HAP-1 (cell line): ENCODE measurements at regions of chr4 and their contacts with region 1.

Region 1: DNA sequence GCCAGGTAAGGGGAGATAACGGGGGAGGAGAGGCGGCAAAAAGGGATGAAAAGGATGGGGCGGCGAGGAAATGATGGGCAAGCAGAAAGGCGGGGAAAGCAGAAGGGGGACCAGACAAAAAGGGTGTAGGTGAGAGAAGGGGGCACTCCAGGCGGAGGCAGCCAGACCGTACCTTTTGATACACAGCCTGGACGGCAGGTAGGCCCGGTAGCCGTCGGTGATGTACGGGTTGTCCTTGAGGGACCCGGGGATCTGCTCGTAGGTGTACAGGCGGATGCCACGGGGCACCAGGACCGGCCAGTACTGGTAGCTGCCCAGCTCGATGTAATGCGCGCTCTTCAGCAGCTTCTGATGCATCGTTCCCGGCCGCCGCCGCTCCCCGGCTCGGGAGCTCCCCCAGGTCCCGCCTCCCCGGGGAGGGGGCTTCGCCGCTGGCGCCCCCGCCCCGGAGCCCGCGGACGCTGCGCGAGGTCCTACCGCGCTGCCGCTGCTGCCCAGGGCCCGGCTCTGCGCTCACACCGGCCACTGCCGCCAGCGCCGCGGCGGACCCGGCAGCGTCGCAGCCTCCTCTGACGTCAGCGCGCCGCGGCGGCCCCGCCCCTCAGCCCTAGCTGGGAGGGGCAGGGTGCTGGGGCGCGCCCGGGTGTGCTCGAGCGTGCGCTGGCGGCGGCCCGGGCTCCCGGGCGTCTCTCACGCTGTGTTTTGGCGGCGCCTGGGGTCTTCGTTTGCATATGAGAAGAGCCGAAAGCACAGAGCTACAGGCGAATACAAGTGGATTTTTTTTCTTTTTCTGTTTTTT is at the start of gene PAQR3:
- DNase-seq: peak; percentile 83 to 92
- H3K4me3 ChIP-seq: peak within 1 kb of the TSS; percentile 66
- H3K4me1 ChIP-seq: peaks cover 22% of the 10 kb centered on the region
- H3K27me3 ChIP-seq: no peaks in the 10 kb centered on the region

Region 2: GRCh38 chr4:80184053-80184790 is 1245.2 kb after region 1 on chr4:
- in situ Hi-C with region 1: loop called (anchors 25 kb)
- DNase-seq: peak; percentile 69 to 95
- H3K4me3 ChIP-seq: peak overlapping the region; percentile 47
- H3K4me1 ChIP-seq: no peaks in the 10 kb centered on the region
- H3K27me3 ChIP-seq: no peaks in the 10 kb centered on the region; the same call in 1 of the 2 replicates

Region 3: DNA sequence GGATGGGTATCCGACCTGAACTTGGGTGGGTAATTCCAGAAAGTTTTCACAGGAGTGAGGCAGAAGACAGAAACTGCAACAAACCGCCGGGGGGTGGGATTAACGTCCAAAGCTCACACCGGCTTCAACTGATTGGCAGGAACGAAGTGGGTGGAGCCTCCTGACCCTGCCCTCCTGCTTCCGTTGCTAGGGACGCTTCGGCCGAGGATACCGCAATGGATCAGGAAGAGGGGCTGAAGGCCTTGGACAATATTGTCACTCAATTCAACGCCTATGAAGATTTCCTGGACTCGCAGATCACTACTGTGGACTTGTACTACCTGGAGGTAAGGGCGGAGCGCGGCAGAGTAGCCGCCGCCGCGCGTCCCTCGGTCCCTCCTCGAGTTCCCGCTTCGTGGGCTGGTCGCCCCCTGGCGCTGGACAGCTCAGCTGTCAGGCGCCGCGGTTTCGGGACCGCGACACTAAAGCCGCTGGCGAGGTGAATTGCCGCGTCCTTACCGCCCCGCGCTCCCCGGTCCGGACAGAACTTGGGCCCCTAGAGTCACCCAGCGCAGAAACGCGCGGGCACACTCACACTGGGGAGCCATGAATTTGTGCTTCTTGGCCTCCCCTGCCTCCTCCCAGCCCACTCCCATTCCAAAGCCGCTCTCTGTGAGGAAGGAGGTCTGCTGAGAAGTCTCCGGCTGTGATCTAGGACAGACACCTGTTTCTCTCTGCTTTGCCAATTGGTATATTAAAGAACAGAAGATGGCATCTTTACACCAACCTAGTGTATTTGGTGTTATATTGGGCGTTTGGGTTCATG is 1396.7 kb after region 1 on chr4 and contains the start of gene CFAP299:
- in situ Hi-C with region 1: loop called (anchors 25 kb)
- DNase-seq: peak; percentile 90 to 96
- H3K4me3 ChIP-seq: peak within 1 kb of the TSS; percentile 40
- H3K4me1 ChIP-seq: peaks cover 5% of the 10 kb centered on the region
- H3K27me3 ChIP-seq: 0 out of 2 replicates have a peak, but pooled peaks cover 5% of the 10 kb centered on the region